ENCODE measurements at regions of chr14 and their contacts with region 1.

Region 1: DNA sequence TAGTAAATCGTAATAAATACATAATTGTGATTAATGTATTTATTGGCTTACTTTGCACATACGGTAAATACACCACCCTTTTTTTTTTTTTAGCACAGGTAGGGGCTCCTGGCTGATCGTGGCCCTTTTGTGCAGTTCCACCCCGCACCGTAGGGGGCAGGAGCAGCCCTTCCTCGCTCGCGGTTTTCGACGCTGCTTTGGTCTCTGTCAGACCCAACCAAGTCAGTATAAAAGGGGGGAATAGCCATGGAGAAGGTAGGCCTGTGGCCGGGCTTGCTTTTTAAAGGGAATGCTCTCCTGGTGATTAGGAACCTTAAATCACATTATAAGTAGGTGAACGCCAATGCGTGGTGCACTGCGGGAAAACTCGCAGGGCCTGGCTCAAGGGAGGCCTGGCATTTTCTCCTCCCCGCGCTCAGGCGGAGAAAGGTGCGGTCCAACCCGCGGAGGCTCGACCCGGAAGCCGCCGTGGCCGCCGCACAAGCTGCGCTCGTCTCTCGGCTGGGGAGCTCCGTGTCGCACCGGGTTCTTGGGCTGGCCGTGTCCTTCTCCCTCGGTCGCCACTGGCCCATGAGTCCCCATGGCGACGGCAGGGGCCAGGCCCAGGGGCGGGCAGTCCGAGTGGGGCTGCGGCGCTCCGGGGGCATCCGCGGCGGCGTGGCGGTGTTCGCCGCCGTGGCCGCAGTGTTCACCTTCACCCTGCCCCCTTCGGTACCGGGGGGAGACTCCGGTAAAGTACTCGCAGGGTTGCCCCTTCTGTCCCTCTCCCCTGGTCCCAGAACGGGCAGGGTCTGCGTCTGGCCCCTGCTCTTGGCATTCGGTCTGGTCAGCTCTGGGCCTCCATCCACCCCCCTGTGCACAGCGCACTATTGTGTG is at the start of gene TMEM260:
- DNase-seq: peak; percentile 81 to 89 (median 84)
- ATAC-seq: peak; percentile 94
- H3K4me3 ChIP-seq: peak within 1 kb of the TSS; percentile 94
- H3K27ac ChIP-seq: peak within 1 kb of the TSS; percentile 95
- H3K4me1 ChIP-seq: peaks cover 3 to 13% of the 10 kb centered on the region in 2 experiments; a peak in 3 of 5 replicates
- H3K27me3 ChIP-seq: no peaks in the 10 kb centered on the region
- CTCF ChIP-seq: peak; percentile 55 to 81 (median 71)
- EP300 ChIP-seq: no peak
- POLR2A ChIP-seq: peak; percentile 84
- RAD21 ChIP-seq: no peak
- polyA plus RNA-seq, gene TMEM260: 2.2 to 2.4 TPM

Region 2: DNA sequence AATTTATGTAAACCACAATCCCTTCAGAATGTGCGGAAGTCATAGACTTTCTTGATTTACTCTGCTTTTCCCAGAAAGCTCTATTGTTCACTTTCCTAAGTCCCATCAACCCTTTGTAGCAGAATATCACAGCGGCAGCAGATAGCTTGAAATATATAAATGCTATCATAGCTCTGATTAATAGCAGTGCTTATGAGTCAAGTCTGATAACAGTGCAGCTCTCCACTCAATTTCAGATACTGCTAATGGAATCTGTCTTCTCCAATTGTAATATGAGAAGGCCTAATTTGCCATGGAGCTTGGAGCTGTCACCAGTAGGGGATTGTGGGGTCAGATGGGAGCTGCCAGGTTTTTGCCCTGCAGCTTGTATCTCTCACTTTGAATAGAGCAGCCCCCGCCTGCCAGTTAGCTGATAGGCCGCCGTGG is 11.0 kb after region 1 on chr14:
- CTCF ChIA-PET with region 1: no interaction called
- POLR2A ChIA-PET with region 1: interaction called, 12 read pairs
- in situ Hi-C with region 1: no loop called
- intact Hi-C with region 1: no loop called
- DNase-seq: no peak
- ATAC-seq: no peak
- H3K4me3 ChIP-seq: no peak overlapping the region
- H3K27ac ChIP-seq: no peak overlapping the region
- H3K4me1 ChIP-seq: no peaks in the 10 kb centered on the region
- H3K27me3 ChIP-seq: no peaks in the 10 kb centered on the region
- CTCF ChIP-seq: no peak
- EP300 ChIP-seq: no peak
- POLR2A ChIP-seq: no peak
- RAD21 ChIP-seq: no peak

Region 3: GRCh38 chr14:56608682-56609081 is 29.1 kb after region 1 on chr14:
- CTCF ChIA-PET with region 1: no interaction called
- POLR2A ChIA-PET with region 1: no interaction called
- in situ Hi-C with region 1: no loop called
- intact Hi-C with region 1: no loop called
- DNase-seq: no peak
- ATAC-seq: peak; percentile 81
- H3K4me3 ChIP-seq: no peak overlapping the region
- H3K27ac ChIP-seq: no peak overlapping the region; the same call in 2 of the 3 replicates
- H3K4me1 ChIP-seq: peaks cover 0 to 2% of the 10 kb centered on the region in 2 experiments; a peak in 1 of 5 replicates
- H3K27me3 ChIP-seq: no peaks in the 10 kb centered on the region
- CTCF ChIP-seq: no peak
- EP300 ChIP-seq: peak; percentile 56; the same call in 1 of the 2 replicates
- POLR2A ChIP-seq: no peak
- RAD21 ChIP-seq: no peak